Activated CD4-positive, alpha-beta memory T cell treated with anti-CD3 and anti-CD28 coated beads for 36 hours (primary cell): ENCODE measurements at regions of chr4 and their contacts with region 1.

Region 1: DNA sequence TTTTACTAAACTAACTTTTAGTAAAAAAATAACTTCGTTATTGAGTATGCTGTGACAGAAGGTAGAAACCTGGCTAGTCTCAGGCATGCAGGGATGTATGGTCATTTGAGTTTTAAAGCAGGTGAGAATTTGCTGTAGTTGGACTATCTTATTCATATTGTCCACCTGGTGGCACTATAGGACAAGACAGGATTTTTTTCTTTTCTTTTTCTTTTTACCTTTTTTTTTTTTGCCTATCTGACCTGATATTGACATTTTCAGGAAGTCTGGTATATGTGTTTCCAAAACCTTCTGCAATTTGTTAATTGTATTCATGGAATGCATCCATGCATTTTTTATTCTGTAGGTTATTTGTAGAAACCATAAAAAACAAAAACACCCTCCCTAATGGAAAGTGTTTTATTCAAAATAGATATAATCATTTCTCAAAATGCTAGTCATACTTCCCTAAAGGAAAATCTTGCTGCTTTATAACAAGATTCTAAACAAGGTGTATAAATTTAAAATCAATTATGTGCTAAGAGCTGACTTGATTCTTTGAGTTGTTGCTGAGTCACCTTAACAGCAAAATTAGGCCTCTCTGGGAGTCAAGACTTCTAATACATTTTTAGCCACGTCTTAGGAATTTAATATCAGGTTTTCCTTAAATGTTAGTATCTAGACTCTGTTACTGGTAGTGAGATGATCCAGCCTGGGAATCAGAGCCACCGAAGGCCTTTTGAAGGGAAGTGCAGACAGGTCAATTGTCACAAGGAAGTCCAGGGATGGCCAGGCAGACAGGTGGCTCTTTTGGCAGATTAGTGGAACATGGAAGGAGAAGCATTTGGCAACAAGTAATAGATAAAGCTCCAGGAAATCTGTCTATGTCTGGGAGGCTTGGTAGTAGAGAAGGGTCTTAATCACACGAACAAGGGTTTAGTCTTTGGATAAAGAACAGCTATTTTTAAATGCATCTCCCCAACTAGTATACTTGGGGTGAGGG is 201.3 kb upstream of the GNPDA2 start:
- DNase-seq: no peak
- H3K4me3 Mint-ChIP-seq: no peak overlapping the region
- H3K27ac Mint-ChIP-seq: no peak overlapping the region
- H3K4me1 Mint-ChIP-seq: no peaks in the 10 kb centered on the region
- H3K27me3 Mint-ChIP-seq: no peaks in the 10 kb centered on the region

Region 2: DNA sequence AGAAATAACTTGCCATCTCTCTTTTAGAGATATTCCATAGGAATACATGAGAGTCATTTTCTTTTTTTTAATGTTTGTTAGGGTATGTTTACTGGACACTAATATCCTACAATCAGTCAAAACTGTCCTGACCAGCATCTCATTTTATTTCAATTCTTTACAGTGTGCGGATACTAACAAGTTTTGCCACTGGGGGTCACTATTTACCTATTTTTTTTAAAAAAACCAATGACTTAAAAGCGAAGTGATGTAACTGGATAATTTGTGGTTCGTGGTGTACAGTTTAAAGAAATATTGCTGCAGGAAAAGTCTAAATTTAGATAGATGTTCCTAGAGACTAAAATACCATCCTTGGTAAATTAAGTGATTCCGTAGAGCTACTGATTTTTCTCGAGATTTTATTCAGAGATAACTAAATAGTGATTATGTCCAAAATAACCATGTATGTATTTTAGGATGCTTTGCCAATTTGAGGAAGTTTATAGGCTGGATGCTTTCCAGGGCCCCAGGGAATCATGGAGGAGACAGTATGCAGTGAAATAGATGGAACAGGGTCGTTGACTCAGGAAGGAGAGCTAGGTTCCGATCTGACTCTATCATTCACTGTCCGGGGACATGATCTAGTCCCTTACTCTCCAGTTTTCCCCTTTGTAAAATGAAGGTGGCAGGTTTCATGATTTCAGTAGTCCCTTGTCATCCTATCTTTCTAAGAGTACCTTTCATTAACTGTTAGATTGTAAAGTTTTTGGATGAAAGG is 167.4 kb before region 1 on chr4:
- CTCF ChIA-PET with region 1: no interaction called
- POLR2A ChIA-PET with region 1: no interaction called
- intact Hi-C with region 1: loop called (anchors 1 kb)
- DNase-seq: no peak
- H3K4me3 Mint-ChIP-seq: no peak overlapping the region
- H3K27ac Mint-ChIP-seq: no peak overlapping the region
- H3K4me1 Mint-ChIP-seq: no peaks in the 10 kb centered on the region
- H3K27me3 Mint-ChIP-seq: peaks cover 9% of the 10 kb centered on the region

Region 3: GRCh38 chr4:45188501-45188900 is 260.8 kb after region 1 on chr4:
- CTCF ChIA-PET with region 1: no interaction called
- POLR2A ChIA-PET with region 1: no interaction called
- intact Hi-C with region 1: no loop called
- DNase-seq: no peak
- H3K4me3 Mint-ChIP-seq: no peak overlapping the region
- H3K27ac Mint-ChIP-seq: no peak overlapping the region
- H3K4me1 Mint-ChIP-seq: no peaks in the 10 kb centered on the region
- H3K27me3 Mint-ChIP-seq: no peaks in the 10 kb centered on the region